CD4-positive, alpha-beta memory T cell (primary cell): ENCODE measurements at regions of chr1 and their contacts with region 1.

Region 1: GRCh38 chr1:198691063-198691462 is 52.2 kb downstream of the PTPRC start:
- DNase-seq: no peak
- H3K4me3 ChIP-seq: no peak overlapping the region
- H3K4me3 Mint-ChIP-seq: peak overlapping the region; percentile 3 to 78 (median 44)
- H3K27ac ChIP-seq: peak overlapping the region; percentile 42
- H3K27ac Mint-ChIP-seq: peak overlapping the region; percentile 72 to 92 (median 88)
- H3K4me1 ChIP-seq: peaks cover 90% of the 10 kb centered on the region
- H3K4me1 Mint-ChIP-seq: peaks cover 60 to 85% (median 73%) of the 10 kb centered on the region in 4 donors
- H3K27me3 ChIP-seq: no peaks in the 10 kb centered on the region
- H3K27me3 Mint-ChIP-seq: no peaks in the 10 kb centered on the region

Region 2: DNA sequence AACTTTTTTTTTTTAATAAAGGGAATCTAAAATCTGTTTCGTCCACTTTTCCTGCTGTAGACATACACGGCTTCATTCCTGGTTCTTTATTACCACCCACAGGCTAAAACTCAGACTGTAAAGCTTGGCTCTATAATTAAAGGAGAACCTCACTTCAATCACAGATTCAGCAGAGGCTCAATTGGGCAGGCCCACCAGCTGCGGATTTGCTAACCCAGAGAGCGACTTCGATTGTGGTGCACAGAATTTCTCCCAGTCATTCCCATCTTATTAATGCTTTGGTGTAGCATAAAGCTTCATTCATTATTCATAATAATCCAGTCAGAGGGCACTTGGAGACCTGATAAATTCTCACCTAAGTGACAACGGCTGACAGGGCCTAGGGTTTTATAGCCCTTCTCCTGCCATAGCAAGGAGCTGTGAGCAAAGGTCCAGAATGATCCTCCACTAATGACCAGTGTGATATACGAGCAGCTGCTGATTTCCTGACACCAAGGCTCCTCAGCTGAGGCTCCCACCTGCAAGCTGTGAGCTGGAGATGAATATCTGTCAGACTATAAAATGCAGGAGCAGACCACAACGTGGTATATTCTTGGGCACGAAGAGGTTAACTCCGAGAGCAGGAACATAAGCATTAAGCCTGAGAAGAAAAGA is 299.5 kb before region 1 on chr1:
- CTCF ChIA-PET with region 1: no interaction called
- POLR2A ChIA-PET with region 1: no interaction called
- intact Hi-C with region 1: no loop called
- DNase-seq: no peak
- H3K4me3 ChIP-seq: no peak overlapping the region
- H3K4me3 Mint-ChIP-seq: no peak overlapping the region
- H3K27ac ChIP-seq: no peak overlapping the region
- H3K27ac Mint-ChIP-seq: peak overlapping the region in 1 of 7 donors; percentile 36
- H3K4me1 ChIP-seq: no peaks in the 10 kb centered on the region
- H3K4me1 Mint-ChIP-seq: no peaks in the 10 kb centered on the region
- H3K27me3 ChIP-seq: no peaks in the 10 kb centered on the region
- H3K27me3 Mint-ChIP-seq: peaks cover 0 to 2% of the 10 kb centered on the region in 2 donors

Region 3: GRCh38 chr1:198651650-198652400 is 39.2 kb before region 1 on chr1:
- CTCF ChIA-PET with region 1: interaction called, 6 read pairs
- POLR2A ChIA-PET with region 1: interaction called, 449 read pairs
- intact Hi-C with region 1: no loop called
- DNase-seq: no peak
- H3K4me3 ChIP-seq: peak overlapping the region; percentile 12 to 39
- H3K4me3 Mint-ChIP-seq: peak overlapping the region; percentile 70 to 88 (median 78)
- H3K27ac ChIP-seq: peak overlapping the region; percentile 73
- H3K27ac Mint-ChIP-seq: peak overlapping the region; percentile 94 to 98 (median 96)
- H3K4me1 ChIP-seq: peaks cover 91% of the 10 kb centered on the region
- H3K4me1 Mint-ChIP-seq: peaks cover 49 to 73% (median 64%) of the 10 kb centered on the region in 4 donors
- H3K27me3 ChIP-seq: no peaks in the 10 kb centered on the region
- H3K27me3 Mint-ChIP-seq: no peaks in the 10 kb centered on the region

Region 4: DNA sequence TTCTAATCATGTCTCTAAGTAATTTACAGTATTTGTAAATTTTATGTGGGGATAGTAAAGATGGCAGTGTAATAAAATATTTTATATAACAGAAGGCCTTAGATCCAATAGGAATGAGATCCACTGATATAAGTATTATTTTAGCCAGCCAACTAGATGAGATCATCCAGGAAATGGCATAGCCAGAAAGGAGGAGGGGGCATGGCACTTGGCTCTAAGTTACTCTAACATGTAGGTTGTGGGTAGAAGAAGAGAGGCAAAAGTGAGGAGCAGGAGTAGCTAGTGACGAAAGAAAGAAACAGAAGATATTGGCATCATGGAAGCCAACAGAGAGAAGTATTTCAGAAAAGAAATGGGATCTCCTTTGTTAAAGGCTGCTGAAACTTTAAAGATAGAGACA is 373.9 kb after region 1 on chr1:
- CTCF ChIA-PET with region 1: no interaction called
- POLR2A ChIA-PET with region 1: no interaction called
- intact Hi-C with region 1: no loop called
- DNase-seq: no peak
- H3K4me3 ChIP-seq: no peak overlapping the region
- H3K4me3 Mint-ChIP-seq: no peak overlapping the region
- H3K27ac ChIP-seq: no peak overlapping the region
- H3K27ac Mint-ChIP-seq: no peak overlapping the region
- H3K4me1 ChIP-seq: no peaks in the 10 kb centered on the region
- H3K4me1 Mint-ChIP-seq: peaks cover 0 to 3% (median 0%) of the 10 kb centered on the region in 4 donors
- H3K27me3 ChIP-seq: no peaks in the 10 kb centered on the region
- H3K27me3 Mint-ChIP-seq: no peaks in the 10 kb centered on the region